Left ventricle myocardium superior (tissue), 1 donor: ENCODE measurements at regions of chr12 and their contacts with region 1.

Region 1: GRCh38 chr12:57899010-57899662 is 42.2 kb upstream of the ATP23 start:
- DNase-seq: peak; percentile 63
- ATAC-seq: peak; percentile 26

Region 2: GRCh38 chr12:57832966-57833365 is 66.2 kb before region 1 on chr12:
- intact Hi-C with region 1: loop called (anchors 5 kb)
- DNase-seq: no peak
- ATAC-seq: no peak